Panc1 (cell line): ENCODE measurements at regions of chr4 and their contacts with region 1.

Region 1: GRCh38 chr4:7295911-7296660 is 103.7 kb downstream of the SORCS2 start:
- DNase-seq: no peak
- ATAC-seq: peak; percentile 68; the same call in 1 of the 2 replicates
- H3K4me3 ChIP-seq: no peak overlapping the region
- H3K27ac ChIP-seq: no peak overlapping the region
- H3K4me1 ChIP-seq: peaks cover 3% of the 10 kb centered on the region; the same call in 1 of the 2 replicates
- H3K27me3 ChIP-seq: no peaks in the 10 kb centered on the region
- CTCF ChIP-seq: peak; percentile 78

Region 2: DNA sequence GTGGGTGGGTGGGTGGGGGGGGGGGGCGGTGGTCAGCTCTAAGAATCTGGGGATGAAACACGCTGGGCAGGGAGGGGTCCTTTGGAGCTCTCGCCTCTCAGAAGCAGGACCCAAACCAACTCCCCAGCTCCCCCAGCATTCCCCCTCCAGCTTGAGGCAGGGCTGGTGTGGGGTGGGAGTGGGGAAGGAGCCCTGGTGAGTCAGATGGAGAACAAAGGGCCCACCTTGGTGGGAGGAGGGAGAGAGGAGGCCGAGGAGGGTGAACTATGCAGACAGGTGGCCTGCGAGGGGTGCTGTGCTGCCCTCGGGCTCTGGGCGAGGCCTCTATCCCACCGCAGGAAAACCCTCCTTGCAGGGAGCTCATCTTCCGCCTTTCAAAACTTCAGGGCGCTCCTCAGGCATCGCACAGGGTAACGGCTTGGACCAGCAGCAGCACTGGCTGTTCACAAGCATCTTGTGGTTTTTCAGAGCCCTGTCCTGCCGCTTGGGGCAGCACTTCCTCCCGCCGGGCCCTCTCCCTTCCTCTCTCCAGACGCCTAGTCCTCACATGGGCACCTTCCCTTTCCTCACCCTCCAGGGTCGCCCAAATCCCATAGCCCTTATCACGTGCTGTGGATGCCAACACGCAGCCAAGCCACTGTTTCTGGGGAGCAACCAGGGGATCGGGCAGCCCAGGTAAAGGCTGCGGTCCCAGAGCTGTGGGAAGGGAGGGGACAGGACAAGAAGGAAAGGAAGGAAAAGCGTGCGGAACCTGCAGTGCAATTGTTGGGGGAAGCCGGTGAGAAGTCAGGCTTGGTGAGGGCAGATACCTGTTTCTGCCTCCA is 194.2 kb before region 1 on chr4:
- CTCF ChIA-PET with region 1: no interaction called
- POLR2A ChIA-PET with region 1: no interaction called
- in situ Hi-C with region 1: no loop called
- intact Hi-C with region 1: loop called (anchors 10 kb)
- DNase-seq: no peak
- ATAC-seq: peak; percentile 89
- H3K4me3 ChIP-seq: peak overlapping the region; percentile 58 to 75
- H3K27ac ChIP-seq: no peak overlapping the region
- H3K4me1 ChIP-seq: no peaks in the 10 kb centered on the region
- H3K27me3 ChIP-seq: no peaks in the 10 kb centered on the region
- CTCF ChIP-seq: peak; percentile 88

Region 3: GRCh38 chr4:7192252-7193029 is 103.6 kb before region 1 on chr4 and contains the start of gene SORCS2:
- CTCF ChIA-PET with region 1: interaction called, 6 read pairs
- POLR2A ChIA-PET with region 1: interaction called, 4 read pairs
- in situ Hi-C with region 1: no loop called
- intact Hi-C with region 1: loop called (anchors 5 kb)
- DNase-seq: no peak
- ATAC-seq: peak; percentile 92
- H3K4me3 ChIP-seq: peak within 1 kb of the TSS; percentile 19 to 20; a peak in 3 of 4 replicates
- H3K27ac ChIP-seq: no peak within 1 kb of the TSS
- H3K4me1 ChIP-seq: no peaks in the 10 kb centered on the region
- H3K27me3 ChIP-seq: no peaks in the 10 kb centered on the region; the same call in 1 of the 2 replicates
- CTCF ChIP-seq: peak; percentile 87
- total RNA-seq, gene SORCS2: 0.15 TPM